ENCODE measurements at regions of chr1 and their contacts with region 1.

Region 1: DNA sequence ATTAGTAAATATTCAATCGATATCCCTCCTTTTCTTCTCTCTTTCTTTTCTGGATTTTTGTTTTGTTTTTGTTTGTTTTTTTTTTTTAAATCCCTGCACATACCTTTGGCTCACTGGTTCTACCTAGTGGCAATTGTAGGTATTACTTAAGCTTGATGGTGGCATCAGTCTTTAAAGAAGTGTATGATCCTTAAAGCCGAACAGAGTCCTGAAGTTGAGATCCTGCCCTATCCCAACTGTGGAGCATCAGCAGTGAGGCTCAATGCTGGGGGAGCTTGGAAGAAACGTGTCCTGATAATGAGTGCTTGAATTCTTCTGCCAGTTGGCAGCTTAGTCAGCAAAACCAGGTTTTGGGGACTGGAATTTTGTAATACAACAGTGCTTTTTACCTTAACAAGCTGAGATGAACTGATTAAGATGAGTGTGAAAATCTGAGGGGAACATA is 60.8 kb downstream of the FASLG start:
- DNase-seq: no peak
- H3K4me3 ChIP-seq: no peak overlapping the region
- H3K27ac ChIP-seq: no peak overlapping the region
- H3K4me1 ChIP-seq: no peaks in the 10 kb centered on the region
- H3K27me3 ChIP-seq: no peaks in the 10 kb centered on the region
- CTCF ChIP-seq: peak; percentile 79

Region 2: DNA sequence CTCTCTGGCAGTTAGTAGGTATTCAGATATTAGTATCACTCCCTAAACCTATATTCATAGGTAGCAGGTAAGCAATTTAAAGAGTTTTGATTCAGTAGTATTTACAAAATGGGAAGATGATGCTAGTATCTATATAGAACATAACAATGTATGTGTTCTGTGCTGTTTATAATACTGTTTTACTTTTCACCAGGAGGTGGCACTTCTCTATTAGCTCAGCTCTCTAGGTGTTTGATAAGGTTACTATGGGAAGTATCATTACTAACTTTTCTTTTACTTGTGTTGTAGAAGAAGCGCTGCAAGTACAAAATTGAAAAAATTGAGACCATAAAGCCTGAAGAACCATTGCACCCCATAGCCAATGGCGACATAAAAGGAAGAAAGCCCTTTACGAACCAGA is 110.2 kb before region 1 on chr1:
- intact Hi-C with region 1: loop called (anchors 2 kb)
- DNase-seq: no peak
- H3K4me3 ChIP-seq: no peak overlapping the region
- H3K27ac ChIP-seq: no peak overlapping the region
- H3K4me1 ChIP-seq: no peaks in the 10 kb centered on the region
- H3K27me3 ChIP-seq: no peaks in the 10 kb centered on the region
- CTCF ChIP-seq: peak; percentile 57

Region 3: DNA sequence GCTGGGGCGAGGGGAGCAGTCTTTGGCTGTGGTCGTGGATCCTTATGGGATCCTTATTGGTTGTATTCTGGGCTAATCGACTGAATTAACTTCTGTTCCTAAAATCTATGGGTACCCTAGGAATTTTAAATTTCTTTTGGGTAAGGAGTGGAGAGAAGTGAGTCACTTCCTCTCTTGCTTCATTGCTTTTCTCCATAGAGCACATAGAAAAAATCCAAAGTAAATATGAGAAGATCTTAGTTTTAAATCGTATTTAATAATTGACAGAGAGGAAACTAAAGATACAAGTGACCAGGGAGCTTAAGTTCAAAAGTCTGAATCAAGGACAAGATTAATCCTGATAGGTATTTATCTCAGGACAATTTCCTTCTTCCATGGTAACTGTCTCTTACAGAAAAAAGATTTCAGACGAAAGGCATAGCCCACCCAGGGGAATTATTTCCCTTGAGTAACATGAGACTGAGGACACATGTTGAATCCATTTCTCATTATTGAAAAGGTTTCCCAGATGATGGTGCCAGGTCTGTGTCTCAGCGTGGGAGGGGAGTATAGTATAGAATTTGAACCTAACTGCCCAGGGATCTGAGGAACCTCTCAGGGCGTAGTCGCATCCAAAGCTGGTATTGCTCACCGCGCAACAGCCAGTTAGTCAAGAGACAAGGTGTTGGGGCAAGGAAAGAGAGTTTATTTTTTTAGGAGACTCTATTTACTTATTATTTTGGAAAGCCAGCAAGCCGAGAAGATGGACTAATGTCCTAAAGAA is 89.5 kb before region 1 on chr1:
- intact Hi-C with region 1: no loop called
- DNase-seq: no peak
- H3K4me3 ChIP-seq: no peak overlapping the region
- H3K27ac ChIP-seq: no peak overlapping the region
- H3K4me1 ChIP-seq: no peaks in the 10 kb centered on the region
- H3K27me3 ChIP-seq: no peaks in the 10 kb centered on the region
- CTCF ChIP-seq: no peak

Measured in left ventricle myocardium inferior (tissue), 1 donor.